ENCODE measurements at regions of chrX and their contacts with region 1.

Region 1: DNA sequence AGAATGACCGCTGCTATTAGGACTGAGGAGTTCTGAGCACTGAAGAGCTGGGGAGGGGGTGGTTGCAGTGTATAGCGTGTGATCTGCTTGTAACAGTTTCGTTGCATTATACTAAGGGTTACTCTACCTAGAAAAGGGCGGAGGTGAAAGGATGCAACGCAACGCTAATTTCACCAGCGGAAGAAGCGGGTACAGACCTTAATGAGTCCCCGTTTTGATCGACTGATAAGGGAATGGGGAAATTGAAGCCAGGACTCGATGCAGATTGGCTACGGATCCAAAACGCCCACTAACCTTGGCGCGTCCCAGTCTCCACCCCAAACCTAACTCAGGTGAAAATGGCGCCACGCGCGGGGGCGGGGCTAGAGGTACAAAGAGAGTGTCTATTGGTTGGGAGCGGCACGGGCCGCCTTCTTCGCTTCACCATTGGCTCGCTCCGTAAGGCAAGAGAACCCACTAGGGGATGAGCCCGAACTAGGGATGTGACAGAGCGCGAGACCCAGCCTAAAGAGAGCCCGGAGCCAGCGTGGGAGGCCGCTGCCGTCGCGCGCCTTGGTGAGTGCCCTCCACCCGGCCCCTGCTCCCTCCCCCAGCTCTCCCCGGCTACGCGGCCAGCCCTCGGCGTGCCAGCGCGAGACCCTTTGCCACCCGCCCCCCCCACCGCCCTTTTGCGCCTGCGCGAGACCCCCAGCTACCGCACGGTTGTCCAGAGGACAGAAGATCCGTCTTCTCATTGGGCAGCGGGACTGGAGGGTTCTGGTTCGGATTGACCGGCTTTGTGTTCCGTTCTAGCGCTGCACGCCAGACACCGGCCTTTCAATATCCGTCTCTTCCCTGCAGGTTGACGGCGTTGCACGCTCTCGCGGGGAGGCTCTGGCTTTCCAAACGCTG is at the start of gene EBP:
- DNase-seq: peak; percentile 97
- H3K4me3 Mint-ChIP-seq: peak within 1 kb of the TSS; percentile 92
- H3K27ac Mint-ChIP-seq: peak within 1 kb of the TSS; percentile 98
- H3K4me1 Mint-ChIP-seq: peaks cover 27% of the 10 kb centered on the region
- H3K27me3 Mint-ChIP-seq: no peaks in the 10 kb centered on the region
- total RNA-seq, gene EBP: 149 to 150 TPM

Region 2: DNA sequence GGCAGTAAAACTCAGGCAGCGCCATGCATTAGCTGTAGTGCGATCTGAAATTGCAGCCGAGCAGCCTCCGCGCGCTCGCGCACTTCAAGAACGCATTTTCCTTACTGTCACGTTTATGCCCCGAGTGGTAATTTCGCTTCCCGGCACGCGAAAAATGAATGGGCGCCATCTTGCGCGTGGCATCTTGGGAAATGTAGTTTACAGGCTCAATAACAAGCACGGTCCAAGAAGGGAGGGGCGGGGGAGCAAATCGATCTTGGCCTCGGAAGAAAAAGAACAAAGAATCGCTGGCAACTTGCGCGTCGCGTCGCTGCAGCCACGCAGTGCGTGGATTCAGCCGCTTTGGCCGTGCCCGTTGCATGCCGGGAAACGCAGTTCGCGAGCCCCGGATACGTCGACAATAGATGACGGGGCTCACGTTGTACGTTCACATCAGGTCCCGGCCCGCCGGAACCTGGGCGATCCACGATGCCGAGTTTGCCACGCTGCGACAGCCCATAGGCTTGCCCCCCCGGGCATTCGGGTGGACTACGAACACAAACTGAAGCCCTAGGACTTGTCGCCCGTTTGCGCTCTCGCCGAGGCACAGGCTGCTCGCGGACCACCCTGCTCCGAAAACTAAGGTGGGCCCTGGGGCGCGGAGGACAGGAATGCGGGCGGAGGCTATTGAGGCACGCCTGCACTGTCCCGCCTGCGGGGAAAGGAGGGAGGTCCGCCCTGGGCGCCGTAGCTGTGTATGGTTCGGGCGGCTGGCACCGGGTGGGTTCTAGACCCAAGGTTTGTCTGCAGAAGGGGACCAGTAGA is 45.6 kb before region 1 on chrX and contains the start of gene FTSJ1:
- CTCF ChIA-PET with region 1: interaction called, 4 read pairs
- POLR2A ChIA-PET with region 1: no interaction called
- intact Hi-C with region 1: loop called (anchors 5 kb)
- DNase-seq: peak; percentile 90
- H3K4me3 Mint-ChIP-seq: peak within 1 kb of the TSS; percentile 94
- H3K27ac Mint-ChIP-seq: peak within 1 kb of the TSS; percentile 93
- H3K4me1 Mint-ChIP-seq: peaks cover 33% of the 10 kb centered on the region
- H3K27me3 Mint-ChIP-seq: no peaks in the 10 kb centered on the region
- total RNA-seq, gene FTSJ1: 62.8 to 73.9 TPM

Region 3: DNA sequence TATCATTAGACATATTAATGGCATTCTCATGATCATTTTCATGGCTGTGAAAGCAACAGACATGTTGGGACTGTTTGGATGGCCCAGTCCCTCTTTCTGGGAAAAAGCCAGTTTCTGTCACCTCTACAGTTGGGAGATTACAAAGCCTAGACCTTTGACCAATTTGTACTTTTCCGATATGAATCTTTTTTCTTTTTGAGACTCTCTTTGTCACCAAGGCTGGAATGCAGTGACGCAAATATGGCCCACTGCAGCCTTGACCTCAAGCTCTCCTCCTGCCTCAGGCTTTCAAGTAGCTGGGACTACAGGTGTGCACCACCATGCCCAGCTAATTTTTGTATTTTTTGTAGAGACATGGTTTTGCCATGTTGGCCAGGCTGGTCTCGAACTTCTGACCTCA is 27.3 kb after region 1 on chrX:
- CTCF ChIA-PET with region 1: no interaction called
- POLR2A ChIA-PET with region 1: no interaction called
- intact Hi-C with region 1: no loop called
- DNase-seq: no peak
- H3K4me3 Mint-ChIP-seq: no peak overlapping the region
- H3K27ac Mint-ChIP-seq: no peak overlapping the region
- H3K4me1 Mint-ChIP-seq: no peaks in the 10 kb centered on the region
- H3K27me3 Mint-ChIP-seq: no peaks in the 10 kb centered on the region

Region 4: GRCh38 chrX:48597353-48598264 is 76.0 kb after region 1 on chrX and contains the start of gene WDR13:
- CTCF ChIA-PET with region 1: no interaction called
- POLR2A ChIA-PET with region 1: no interaction called
- intact Hi-C with region 1: loop called (anchors 1 kb)
- DNase-seq: peak; percentile 93
- H3K4me3 Mint-ChIP-seq: peak within 1 kb of the TSS; percentile 96
- H3K27ac Mint-ChIP-seq: peak within 1 kb of the TSS; percentile 99
- H3K4me1 Mint-ChIP-seq: peaks cover 8% of the 10 kb centered on the region
- H3K27me3 Mint-ChIP-seq: no peaks in the 10 kb centered on the region
- total RNA-seq, gene WDR13: 45.8 to 54.8 TPM